ENCODE measurements at regions of chr12 and their contacts with region 1.

Region 1: GRCh38 chr12:31749024-31749704 is 20.3 kb upstream of the AMN1 start:
- DNase-seq: peak; percentile 96
- ATAC-seq: peak; percentile 95
- H3K4me3 ChIP-seq: no peak overlapping the region
- H3K27ac ChIP-seq: peak overlapping the region; percentile 90
- H3K4me1 ChIP-seq: peaks cover 35% of the 10 kb centered on the region
- H3K27me3 ChIP-seq: no peaks in the 10 kb centered on the region
- CTCF ChIP-seq: no peak

Region 2: DNA sequence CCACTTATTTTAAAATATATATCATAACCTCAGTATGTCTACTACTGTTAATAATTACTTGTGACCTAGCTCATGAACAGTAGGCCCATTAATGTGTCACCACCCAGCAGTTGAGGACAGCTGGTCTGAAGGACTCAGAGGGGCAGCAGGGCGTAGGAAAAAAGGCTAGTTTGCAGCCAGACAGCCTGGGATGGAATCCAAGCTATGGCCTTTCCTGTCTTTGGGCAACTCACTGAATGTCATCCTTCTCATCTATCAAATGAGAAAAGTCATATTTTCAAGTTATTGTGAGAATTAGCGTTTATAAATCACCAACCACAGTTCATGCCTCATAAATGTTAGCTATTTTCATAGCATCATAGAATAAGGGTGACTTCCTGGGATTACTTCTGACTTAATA is 170.5 kb before region 1 on chr12:
- CTCF ChIA-PET with region 1: no interaction called
- POLR2A ChIA-PET with region 1: no interaction called
- intact Hi-C with region 1: no loop called
- DNase-seq: no peak
- ATAC-seq: no peak
- H3K4me3 ChIP-seq: no peak overlapping the region
- H3K27ac ChIP-seq: no peak overlapping the region
- H3K4me1 ChIP-seq: no peaks in the 10 kb centered on the region
- H3K27me3 ChIP-seq: no peaks in the 10 kb centered on the region
- CTCF ChIP-seq: no peak

Region 3: GRCh38 chr12:31659087-31659933 is 89.9 kb before region 1 on chr12 and contains the start of gene ETFBKMT:
- CTCF ChIA-PET with region 1: no interaction called
- POLR2A ChIA-PET with region 1: no interaction called
- intact Hi-C with region 1: loop called (anchors 2 kb)
- DNase-seq: peak; percentile 93
- ATAC-seq: peak; percentile 99
- H3K4me3 ChIP-seq: peak within 1 kb of the TSS; percentile 100
- H3K27ac ChIP-seq: peak within 1 kb of the TSS; percentile 72
- H3K4me1 ChIP-seq: peaks cover 8% of the 10 kb centered on the region
- H3K27me3 ChIP-seq: no peaks in the 10 kb centered on the region
- CTCF ChIP-seq: peak; percentile 21; the same call in 1 of the 2 replicates
- total RNA-seq, gene ETFBKMT: 0.52 and 0.58 TPM in 2 replicates

Region 4: GRCh38 chr12:31728917-31729640 is 20.1 kb before region 1 on chr12 and contains the start of gene AMN1:
- CTCF ChIA-PET with region 1: no interaction called
- POLR2A ChIA-PET with region 1: interaction called, 26 read pairs
- intact Hi-C with region 1: loop called (anchors 1 kb)
- DNase-seq: peak; percentile 98
- ATAC-seq: peak; percentile 96
- H3K4me3 ChIP-seq: peak within 1 kb of the TSS; percentile 88
- H3K27ac ChIP-seq: peak within 1 kb of the TSS; percentile 77
- H3K4me1 ChIP-seq: peaks cover 38% of the 10 kb centered on the region
- H3K27me3 ChIP-seq: no peaks in the 10 kb centered on the region
- CTCF ChIP-seq: no peak
- total RNA-seq, gene AMN1: 2.1 and 3.9 TPM in 2 replicates

Region 5: GRCh38 chr12:32051559-32052414 is 302.6 kb after region 1 on chr12:
- CTCF ChIA-PET with region 1: no interaction called
- POLR2A ChIA-PET with region 1: no interaction called
- intact Hi-C with region 1: no loop called
- DNase-seq: peak; percentile 95
- ATAC-seq: peak; percentile 98
- H3K4me3 ChIP-seq: no peak overlapping the region
- H3K27ac ChIP-seq: peak overlapping the region; percentile 72
- H3K4me1 ChIP-seq: peaks cover 7% of the 10 kb centered on the region
- H3K27me3 ChIP-seq: no peaks in the 10 kb centered on the region
- CTCF ChIP-seq: no peak

Region 6: DNA sequence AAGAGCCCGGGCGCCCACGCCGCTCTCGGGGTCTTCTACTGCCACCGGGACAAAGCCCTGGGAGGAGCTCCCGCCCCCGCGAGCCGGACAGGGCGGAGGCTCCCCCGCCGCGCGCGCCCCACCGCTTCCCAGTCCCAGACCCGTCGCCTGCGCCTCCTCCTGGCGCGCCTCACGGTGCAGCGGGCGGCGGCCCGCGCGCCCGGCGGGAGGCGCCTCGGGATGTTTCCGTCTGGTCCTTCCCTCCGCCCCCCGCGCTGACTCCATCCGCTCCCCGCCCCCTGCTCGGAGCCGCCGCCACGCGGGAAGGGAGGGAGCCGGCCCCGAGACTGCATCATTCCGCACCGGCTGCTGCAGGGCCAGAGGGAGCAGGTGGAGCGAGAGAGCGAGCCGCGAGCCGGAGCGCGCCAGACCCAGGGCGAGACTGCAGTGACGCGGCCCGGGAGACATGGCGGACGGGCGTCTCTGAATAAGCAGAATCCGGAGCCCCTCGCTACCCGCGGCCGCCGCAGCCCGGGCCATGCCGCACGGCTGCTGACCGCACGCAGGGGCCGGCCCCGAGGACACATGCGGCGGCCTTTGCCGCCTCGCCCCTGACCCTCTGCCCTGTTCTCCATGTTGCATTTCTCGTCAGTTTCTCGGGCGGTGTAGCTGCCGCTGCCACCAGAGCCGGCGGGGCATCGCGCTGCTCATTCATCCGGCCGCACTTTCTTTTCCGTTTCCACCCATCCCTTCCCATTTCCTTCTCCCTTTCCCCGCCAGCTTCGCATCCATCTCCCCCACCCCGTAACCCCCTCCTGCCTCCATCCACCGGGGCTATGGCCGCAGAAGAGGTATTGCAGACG is 357.6 kb after region 1 on chr12 and contains the start of gene BICD1:
- CTCF ChIA-PET with region 1: no interaction called
- POLR2A ChIA-PET with region 1: no interaction called
- intact Hi-C with region 1: loop called (anchors 2 kb)
- DNase-seq: peak; percentile 75
- ATAC-seq: peak; percentile 82
- H3K4me3 ChIP-seq: peak within 1 kb of the TSS; percentile 93
- H3K27ac ChIP-seq: peak within 1 kb of the TSS; percentile 66
- H3K4me1 ChIP-seq: peaks cover 13% of the 10 kb centered on the region
- H3K27me3 ChIP-seq: no peaks in the 10 kb centered on the region
- CTCF ChIP-seq: peak; percentile 32; the same call in 1 of the 2 replicates
- total RNA-seq, gene BICD1: 9.2 and 15.7 TPM in 2 replicates

Measured in PC-3 (cell line).